Activated T-helper 2 cell treated with anti-CD3 and anti-CD28 coated beads, Interferon-gamma antibody, Interleukin-2, Interleukin-4, amounts not matched to agents 10 μg/mL and 5 μg/mL and 100 μg/mL, durations not matched to agents 14 hours and 24 hours and 36 hours (primary cell): ENCODE measurements at regions of chr18 and their contacts with region 1.

Region 1: DNA sequence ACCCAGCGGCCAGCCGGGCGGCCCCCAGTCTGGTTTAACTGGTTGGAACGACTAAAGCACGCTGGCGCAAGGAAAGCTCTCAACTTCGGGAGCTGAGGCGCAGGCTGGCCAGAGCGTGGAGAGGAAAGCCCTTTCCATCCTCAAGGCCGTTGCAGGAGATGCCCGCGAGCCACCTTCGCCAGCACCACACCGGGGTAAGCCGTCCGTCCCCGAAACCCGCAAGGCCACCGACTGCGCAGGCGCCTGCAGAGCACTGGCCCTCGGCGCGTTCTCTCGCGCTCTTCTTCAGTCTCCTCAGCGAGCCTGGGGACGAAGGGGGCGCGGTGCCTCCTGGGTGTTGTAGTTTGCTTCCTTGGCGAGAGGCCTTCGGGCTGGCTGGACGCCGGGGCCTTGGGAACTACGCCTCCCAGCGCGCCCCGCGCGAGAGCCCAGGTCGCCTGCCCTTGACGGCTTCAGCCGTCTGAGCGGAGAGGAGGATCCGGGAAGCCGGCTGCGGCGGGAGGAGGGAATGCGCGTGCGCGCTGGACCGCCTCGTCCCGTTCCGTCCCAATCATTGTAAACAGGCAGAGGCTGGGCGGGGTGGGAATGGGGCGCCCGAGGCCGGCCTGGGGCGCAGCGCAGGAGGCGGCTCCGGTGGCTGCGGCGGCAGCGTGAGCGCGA is at the start of gene RALBP1:
- DNase-seq: peak; percentile 98
- H3K4me3 Mint-ChIP-seq: peak within 1 kb of the TSS; percentile 89
- H3K27ac Mint-ChIP-seq: peak within 1 kb of the TSS; percentile 88
- H3K4me1 Mint-ChIP-seq: peaks cover 21% of the 10 kb centered on the region
- H3K27me3 Mint-ChIP-seq: peaks cover 20% of the 10 kb centered on the region
- total RNA-seq, gene RALBP1: 39.2 and 40.1 TPM in 2 replicates

Region 2: GRCh38 chr18:8704361-8705279 is 770.5 kb before region 1 on chr18:
- intact Hi-C with region 1: loop called (anchors 5 kb)
- DNase-seq: peak; percentile 77
- H3K4me3 Mint-ChIP-seq: peak overlapping the region; percentile 85
- H3K27ac Mint-ChIP-seq: no peak overlapping the region
- H3K4me1 Mint-ChIP-seq: peaks cover 13% of the 10 kb centered on the region
- H3K27me3 Mint-ChIP-seq: peaks cover 72% of the 10 kb centered on the region

Region 3: GRCh38 chr18:9136315-9137155 is 338.6 kb before region 1 on chr18 and contains the start of gene ANKRD12:
- intact Hi-C with region 1: loop called (anchors 5 kb)
- DNase-seq: peak; percentile 98
- H3K4me3 Mint-ChIP-seq: peak within 1 kb of the TSS; percentile 95
- H3K27ac Mint-ChIP-seq: peak within 1 kb of the TSS; percentile 99
- H3K4me1 Mint-ChIP-seq: peaks cover 54% of the 10 kb centered on the region
- H3K27me3 Mint-ChIP-seq: no peaks in the 10 kb centered on the region
- total RNA-seq, gene ANKRD12: 66.0 and 68.7 TPM in 2 replicates

Region 4: DNA sequence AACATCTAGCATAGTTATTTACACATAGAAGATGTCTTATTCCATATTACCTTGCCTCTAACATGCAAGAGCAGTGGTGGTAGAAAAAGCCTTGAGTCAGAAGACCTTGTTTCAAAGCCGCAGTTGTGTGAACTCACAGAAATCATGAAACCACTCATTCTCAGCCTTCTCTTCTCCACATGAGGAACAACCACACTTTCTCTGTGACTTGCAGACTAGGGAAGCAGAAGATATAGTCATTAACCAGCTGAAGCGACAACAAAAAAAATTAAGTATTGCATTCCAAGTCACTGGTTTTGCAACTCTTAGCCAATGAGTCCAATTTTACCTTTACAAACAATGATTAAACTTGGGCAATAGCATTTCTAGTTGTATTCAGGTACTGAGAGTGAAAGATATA is 121.5 kb before region 1 on chr18:
- intact Hi-C with region 1: no loop called
- DNase-seq: no peak
- H3K4me3 Mint-ChIP-seq: no peak overlapping the region
- H3K27ac Mint-ChIP-seq: no peak overlapping the region
- H3K4me1 Mint-ChIP-seq: no peaks in the 10 kb centered on the region
- H3K27me3 Mint-ChIP-seq: no peaks in the 10 kb centered on the region

Region 5: DNA sequence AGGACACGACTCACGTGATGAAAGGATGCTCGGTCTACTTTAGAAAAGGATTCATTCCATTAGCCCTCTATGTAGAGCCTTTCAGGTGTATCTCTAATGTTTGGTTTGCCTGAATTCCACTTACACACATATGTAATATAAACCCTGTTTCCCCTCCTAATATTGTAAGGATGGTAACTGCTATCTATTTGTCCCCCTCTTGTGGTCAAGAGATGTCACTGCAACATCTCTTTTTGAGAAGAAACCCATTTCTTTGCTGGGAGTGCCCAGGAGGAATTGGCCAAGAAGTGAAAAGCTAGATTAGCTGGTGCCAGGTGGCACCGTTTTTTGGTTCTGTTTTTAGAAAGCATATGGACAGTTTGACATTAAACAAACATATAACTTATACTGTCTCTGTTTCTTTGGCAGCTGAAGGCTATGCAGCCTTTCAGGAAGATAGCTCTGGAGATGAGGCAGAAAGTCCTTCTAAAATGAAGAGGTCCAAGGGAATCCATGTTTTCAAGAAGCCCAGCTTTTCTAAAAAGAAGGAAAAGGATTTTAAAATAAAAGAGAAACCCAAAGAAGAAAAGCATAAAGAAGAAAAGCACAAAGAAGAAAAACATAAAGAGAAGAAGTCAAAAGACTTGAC is 41.4 kb after region 1 on chr18:
- intact Hi-C with region 1: loop called (anchors 5 kb)
- DNase-seq: no peak
- H3K4me3 Mint-ChIP-seq: no peak overlapping the region
- H3K27ac Mint-ChIP-seq: no peak overlapping the region
- H3K4me1 Mint-ChIP-seq: no peaks in the 10 kb centered on the region
- H3K27me3 Mint-ChIP-seq: no peaks in the 10 kb centered on the region

Region 6: DNA sequence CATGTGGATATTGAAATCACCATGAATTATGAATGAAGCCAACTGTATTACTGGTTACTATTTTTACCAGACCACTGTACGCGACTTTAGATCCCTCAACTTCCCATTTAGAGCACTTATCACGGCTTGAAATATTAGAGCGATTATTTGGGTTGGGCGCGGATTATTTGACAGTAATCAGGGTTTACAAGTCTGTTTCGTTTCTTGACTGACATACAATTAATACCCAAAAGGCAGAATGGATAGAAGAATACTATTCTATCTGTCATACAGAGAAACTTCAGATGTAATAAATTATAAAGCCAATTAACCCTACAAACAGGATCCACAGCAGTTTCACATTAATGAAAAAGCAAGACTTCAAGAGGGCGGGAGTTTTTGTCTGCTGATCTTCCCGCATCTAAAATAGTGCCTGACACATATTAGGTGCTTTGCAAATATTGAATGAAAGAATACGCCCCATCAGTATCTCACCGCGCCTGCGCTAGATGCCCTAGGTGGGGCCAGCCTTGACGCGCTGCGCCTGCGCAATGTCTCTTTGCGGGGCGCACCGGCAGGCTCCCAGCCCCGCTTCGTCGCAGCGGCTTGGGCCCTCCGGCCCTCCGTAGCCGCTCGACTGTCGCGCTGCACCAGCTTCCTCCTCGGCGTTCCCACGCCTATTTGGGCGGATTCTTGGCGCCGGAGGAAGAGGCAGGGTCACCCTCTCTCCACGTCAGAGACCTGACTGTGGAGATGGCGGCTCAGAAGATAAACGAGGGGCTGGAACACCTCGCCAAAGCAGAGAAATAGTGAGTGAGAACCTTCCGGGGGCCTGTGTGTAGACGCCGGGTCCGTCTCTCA is 1050.5 kb after region 1 on chr18 and contains the start of gene NAPG:
- intact Hi-C with region 1: loop called (anchors 5 kb)
- DNase-seq: peak; percentile 91
- H3K4me3 Mint-ChIP-seq: peak within 1 kb of the TSS; percentile 97
- H3K27ac Mint-ChIP-seq: peak within 1 kb of the TSS; percentile 98
- H3K4me1 Mint-ChIP-seq: peaks cover 43% of the 10 kb centered on the region
- H3K27me3 Mint-ChIP-seq: peaks cover 12% of the 10 kb centered on the region
- total RNA-seq, gene NAPG: 35.2 and 35.3 TPM in 2 replicates